Heart left ventricle (tissue), 16 donors: ENCODE measurements at regions of chr19 and their contacts with region 1.

Region 1: GRCh38 chr19:16897154-16897855 is 8.5 kb downstream of the F2RL3 start:
- DNase-seq: peak; percentile 94 to 97 (median 95)
- ATAC-seq: peak; percentile 89 to 93 (median 90)
- H3K4me3 ChIP-seq: peak overlapping the region; percentile 12 to 84 (median 62)
- H3K27ac ChIP-seq: peak overlapping the region; percentile 3 to 85 (median 78)
- H3K4me1 ChIP-seq: peaks cover 0 to 30% (median 9%) of the 10 kb centered on the region in 12 donors
- H3K27me3 ChIP-seq: peaks cover 0 to 26% (median 0%) of the 10 kb centered on the region in 9 donors
- CTCF ChIP-seq: no peak
- POLR2A ChIP-seq: peak in 1 of 2 donors; percentile 22

Region 2: GRCh38 chr19:16572332-16573211 is 324.7 kb before region 1 on chr19 and contains the start of gene SLC35E1:
- intact Hi-C with region 1: loop called in 1 of 10 experiments (anchors 5 kb)
- DNase-seq: peak; percentile 94 to 98 (median 97)
- ATAC-seq: peak; percentile 96 to 99 (median 98)
- H3K4me3 ChIP-seq: peak within 1 kb of the TSS; percentile 69 to 98 (median 85)
- H3K27ac ChIP-seq: peak within 1 kb of the TSS; percentile 35 to 93 (median 86)
- H3K4me1 ChIP-seq: peaks cover 7 to 54% (median 27%) of the 10 kb centered on the region in 12 donors
- H3K27me3 ChIP-seq: no peaks in the 10 kb centered on the region
- CTCF ChIP-seq: no peak
- POLR2A ChIP-seq: peak in 1 of 2 donors; percentile 70
- total RNA-seq, gene SLC35E1: 20.4 to 44.0 (median 24.0) TPM

Region 3: DNA sequence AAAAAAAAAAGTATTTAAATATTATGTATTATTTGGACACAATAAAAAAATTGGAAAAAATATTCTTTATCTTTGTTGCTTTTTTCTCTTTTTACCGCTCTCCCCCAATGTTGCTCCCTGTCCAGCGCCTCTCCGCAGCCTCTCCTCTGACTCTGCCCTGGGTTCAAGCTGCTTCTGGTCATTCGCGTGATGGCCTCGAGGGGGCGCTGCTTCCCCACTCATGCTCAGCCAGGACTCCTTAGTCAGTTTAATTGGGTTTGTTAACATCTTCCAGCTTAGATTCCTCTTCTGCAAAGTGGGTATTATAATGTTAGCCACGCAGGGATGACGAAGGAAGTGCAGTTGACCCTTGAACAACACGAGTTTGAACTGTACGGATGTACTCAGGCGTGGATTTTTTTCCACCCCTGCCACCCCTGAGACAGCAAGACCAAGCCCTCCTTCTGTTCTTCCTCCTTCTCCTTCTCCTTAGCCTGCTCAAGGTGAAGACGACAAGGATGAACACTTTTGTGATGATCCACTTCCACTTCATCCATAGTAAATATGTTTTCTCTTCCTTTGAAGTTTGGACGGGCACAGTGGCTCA is 182.5 kb before region 1 on chr19:
- intact Hi-C with region 1: no loop called
- DNase-seq: peak in 2 of 5 donors; percentile 30 to 68
- ATAC-seq: peak in 1 of 4 donors; percentile 52
- H3K4me3 ChIP-seq: no peak overlapping the region
- H3K27ac ChIP-seq: no peak overlapping the region
- H3K4me1 ChIP-seq: no peaks in the 10 kb centered on the region
- H3K27me3 ChIP-seq: no peaks in the 10 kb centered on the region
- CTCF ChIP-seq: peak; percentile 43 to 77 (median 70)
- POLR2A ChIP-seq: no peak

Region 4: GRCh38 chr19:16771618-16772017 is 125.7 kb before region 1 on chr19:
- intact Hi-C with region 1: loop called in 7 of 10 experiments (anchors 5 to 10 kb)
- DNase-seq: peak in 4 of 5 donors; percentile 69 to 84 (median 76)
- ATAC-seq: peak; percentile 71 to 88 (median 86)
- H3K4me3 ChIP-seq: no peak overlapping the region
- H3K27ac ChIP-seq: no peak overlapping the region
- H3K4me1 ChIP-seq: no peaks in the 10 kb centered on the region
- H3K27me3 ChIP-seq: no peaks in the 10 kb centered on the region
- CTCF ChIP-seq: peak; percentile 73 to 92 (median 84)
- POLR2A ChIP-seq: no peak

Region 5: DNA sequence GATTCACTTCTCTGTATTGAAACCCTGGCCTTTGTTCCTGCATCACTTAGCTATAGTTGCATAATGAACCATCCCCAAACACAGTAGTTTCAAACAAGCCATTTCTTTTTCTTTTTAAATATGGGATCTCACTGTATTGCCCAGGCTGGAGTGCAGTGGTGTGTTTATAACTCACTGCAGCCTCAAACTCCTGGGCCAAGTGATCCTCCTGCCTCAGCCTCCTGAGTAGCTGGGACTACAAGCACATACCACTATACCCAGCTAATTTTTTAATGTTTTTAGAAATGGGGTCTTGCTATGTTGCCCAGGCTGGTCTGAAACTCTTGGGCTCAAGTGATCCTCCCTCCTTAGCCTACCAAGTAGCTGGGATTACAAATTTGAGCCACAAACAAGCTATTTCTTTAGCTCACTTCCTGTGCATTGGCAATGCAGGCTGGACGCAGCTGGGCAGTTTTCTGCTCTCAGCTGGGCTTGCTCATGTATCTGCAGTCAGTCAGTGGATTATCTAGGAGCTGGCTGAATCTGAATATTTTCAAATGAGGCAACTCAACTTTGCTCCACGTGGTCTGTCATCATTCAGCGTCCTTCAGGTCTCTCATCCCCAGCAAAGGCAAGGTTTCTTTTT is 117.7 kb before region 1 on chr19:
- intact Hi-C with region 1: loop called in 8 of 10 experiments (anchors 5 to 10 kb)
- DNase-seq: no peak
- ATAC-seq: peak in 1 of 4 donors; percentile 59
- H3K4me3 ChIP-seq: no peak overlapping the region
- H3K27ac ChIP-seq: no peak overlapping the region
- H3K4me1 ChIP-seq: no peaks in the 10 kb centered on the region
- H3K27me3 ChIP-seq: no peaks in the 10 kb centered on the region
- CTCF ChIP-seq: no peak
- POLR2A ChIP-seq: no peak

Region 6: DNA sequence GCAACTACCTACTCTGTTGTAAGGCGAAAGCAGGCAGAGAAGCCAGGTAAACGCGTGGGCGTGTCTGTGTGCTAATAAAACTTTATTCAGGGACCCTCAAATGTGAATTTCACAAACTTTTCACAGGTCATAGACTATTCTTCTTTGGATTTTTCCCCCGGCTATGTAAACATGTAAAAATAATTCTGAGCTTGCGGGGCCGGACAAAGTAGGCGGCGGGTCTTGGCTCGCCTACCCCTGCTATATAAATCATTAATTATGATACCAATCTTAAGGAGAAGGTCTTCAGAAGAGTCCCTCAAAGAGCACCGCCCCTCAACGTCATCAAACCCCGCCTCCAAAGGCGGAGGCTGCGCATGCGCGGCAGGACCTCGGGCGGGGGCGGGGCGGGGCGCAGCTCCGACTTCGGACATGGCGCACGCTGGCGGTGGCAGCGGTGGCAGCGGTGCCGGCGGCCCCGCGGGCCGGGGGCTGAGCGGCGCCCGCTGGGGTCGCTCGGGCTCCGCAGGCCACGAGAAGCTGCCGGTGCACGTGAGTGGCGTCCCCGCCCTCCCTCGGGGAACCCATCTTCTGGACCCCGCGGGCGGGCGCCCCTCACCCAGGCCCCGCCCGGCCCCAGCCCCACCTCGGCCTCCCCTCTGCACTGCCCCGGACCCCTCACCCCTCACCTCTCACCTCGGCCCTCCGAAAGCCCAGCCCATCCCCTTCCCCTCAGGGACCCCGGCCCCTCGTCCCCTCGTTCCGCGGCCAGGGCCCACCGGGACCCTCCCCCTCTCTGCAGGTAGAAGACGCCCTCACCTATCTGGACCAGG is 68.1 kb before region 1 on chr19 and contains the start of gene SIN3B:
- intact Hi-C with region 1: loop called in 3 of 10 experiments (anchors 5 to 10 kb)
- DNase-seq: peak; percentile 83 to 93 (median 86)
- ATAC-seq: peak; percentile 60 to 92 (median 90)
- H3K4me3 ChIP-seq: peak within 1 kb of the TSS; percentile 61 to 99 (median 78)
- H3K27ac ChIP-seq: peak within 1 kb of the TSS; percentile 53 to 91 (median 75)
- H3K4me1 ChIP-seq: peaks cover 0 to 46% (median 23%) of the 10 kb centered on the region in 12 donors
- H3K27me3 ChIP-seq: no peaks in the 10 kb centered on the region
- CTCF ChIP-seq: no peak
- POLR2A ChIP-seq: peak; percentile 28 to 67
- total RNA-seq, gene SIN3B: 15.2 to 36.6 (median 24.7) TPM

Region 7: DNA sequence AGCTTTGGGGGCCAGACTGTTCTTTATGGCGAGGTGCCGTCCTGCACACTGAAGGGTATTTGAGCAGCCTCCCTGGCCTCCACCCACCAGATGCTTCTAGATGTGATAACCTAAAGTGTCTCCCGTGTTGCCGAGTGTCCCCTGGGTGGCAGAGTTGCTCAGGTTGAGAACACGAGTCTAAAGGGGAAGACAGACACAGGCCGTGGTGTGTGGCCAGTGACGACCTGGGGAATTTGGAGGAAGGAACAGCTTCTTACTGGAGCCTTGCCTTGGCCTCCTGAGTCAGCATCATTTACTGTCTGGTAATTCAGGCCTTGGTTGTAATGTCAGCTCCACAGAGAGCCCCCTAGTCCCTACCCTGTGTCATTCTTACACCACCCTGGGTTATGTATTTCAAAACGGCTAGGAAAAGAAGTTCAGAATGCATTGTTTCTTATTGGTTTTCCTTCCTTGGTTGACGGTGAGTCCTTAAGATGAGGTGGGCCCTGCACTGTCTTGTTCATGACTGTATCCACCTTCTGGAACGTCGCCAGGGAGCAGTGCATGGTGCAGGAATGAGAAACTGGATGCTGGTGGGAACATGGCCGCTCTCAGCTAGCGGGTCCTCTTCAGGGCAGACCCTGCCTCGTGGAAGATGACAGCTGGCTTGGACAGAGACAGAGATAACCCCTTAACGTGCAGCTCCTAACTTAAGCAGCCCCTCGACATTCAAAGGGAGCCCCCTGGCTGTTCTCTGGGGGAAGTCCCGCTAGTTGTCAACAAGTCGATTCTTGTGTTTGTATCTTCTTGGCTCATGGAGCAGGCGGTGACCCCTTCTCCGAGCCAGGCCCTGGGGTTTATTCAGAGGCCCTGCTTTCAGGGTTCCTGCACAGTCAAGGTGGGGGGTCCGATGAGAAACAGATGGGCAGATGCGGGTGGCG is 60.9 kb before region 1 on chr19:
- intact Hi-C with region 1: loop called in 3 of 10 experiments (anchors 5 to 10 kb)
- DNase-seq: peak in 3 of 5 donors; percentile 40 to 45 (median 41)
- ATAC-seq: peak in 3 of 4 donors; percentile 36 to 81 (median 63)
- H3K4me3 ChIP-seq: no peak overlapping the region
- H3K27ac ChIP-seq: no peak overlapping the region
- H3K4me1 ChIP-seq: peaks cover 0 to 10% (median under 1%) of the 10 kb centered on the region in 12 donors
- H3K27me3 ChIP-seq: no peaks in the 10 kb centered on the region
- CTCF ChIP-seq: peak in 2 of 12 donors; percentile 6 to 8
- POLR2A ChIP-seq: no peak

Region 8: DNA sequence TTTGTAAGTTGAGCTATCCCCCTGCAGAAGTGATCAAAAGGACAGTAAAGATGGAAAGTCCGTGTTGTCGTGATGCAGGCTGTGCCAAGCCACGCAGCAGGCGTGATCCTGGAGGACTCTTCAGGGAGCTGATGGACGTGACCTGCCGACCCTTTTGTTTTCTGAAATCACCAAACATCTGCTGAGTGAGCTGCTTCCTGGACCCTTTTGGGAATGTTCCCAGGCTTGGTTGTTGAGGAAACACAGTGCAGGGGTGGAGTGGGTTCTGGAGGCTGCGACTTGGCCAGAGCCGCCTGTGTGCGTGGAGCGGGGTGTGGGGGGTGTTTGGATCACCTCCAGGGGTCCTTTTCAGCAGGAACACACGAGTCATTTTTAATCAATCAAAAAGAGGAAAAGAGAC is 144.7 kb after region 1 on chr19:
- intact Hi-C with region 1: loop called in 1 of 10 experiments (anchors 5 kb)
- DNase-seq: peak in 4 of 5 donors; percentile 56 to 66 (median 65)
- ATAC-seq: peak; percentile 78 to 95 (median 82)
- H3K4me3 ChIP-seq: no peak overlapping the region
- H3K27ac ChIP-seq: peak overlapping the region in 10 of 12 donors; percentile 22 to 83 (median 64)
- H3K4me1 ChIP-seq: peaks cover 0 to 13% (median 0%) of the 10 kb centered on the region in 12 donors
- H3K27me3 ChIP-seq: no peaks in the 10 kb centered on the region
- CTCF ChIP-seq: no peak
- POLR2A ChIP-seq: no peak